A673 (cell line): ENCODE measurements at regions of chr12 and their contacts with region 1.

Region 1: DNA sequence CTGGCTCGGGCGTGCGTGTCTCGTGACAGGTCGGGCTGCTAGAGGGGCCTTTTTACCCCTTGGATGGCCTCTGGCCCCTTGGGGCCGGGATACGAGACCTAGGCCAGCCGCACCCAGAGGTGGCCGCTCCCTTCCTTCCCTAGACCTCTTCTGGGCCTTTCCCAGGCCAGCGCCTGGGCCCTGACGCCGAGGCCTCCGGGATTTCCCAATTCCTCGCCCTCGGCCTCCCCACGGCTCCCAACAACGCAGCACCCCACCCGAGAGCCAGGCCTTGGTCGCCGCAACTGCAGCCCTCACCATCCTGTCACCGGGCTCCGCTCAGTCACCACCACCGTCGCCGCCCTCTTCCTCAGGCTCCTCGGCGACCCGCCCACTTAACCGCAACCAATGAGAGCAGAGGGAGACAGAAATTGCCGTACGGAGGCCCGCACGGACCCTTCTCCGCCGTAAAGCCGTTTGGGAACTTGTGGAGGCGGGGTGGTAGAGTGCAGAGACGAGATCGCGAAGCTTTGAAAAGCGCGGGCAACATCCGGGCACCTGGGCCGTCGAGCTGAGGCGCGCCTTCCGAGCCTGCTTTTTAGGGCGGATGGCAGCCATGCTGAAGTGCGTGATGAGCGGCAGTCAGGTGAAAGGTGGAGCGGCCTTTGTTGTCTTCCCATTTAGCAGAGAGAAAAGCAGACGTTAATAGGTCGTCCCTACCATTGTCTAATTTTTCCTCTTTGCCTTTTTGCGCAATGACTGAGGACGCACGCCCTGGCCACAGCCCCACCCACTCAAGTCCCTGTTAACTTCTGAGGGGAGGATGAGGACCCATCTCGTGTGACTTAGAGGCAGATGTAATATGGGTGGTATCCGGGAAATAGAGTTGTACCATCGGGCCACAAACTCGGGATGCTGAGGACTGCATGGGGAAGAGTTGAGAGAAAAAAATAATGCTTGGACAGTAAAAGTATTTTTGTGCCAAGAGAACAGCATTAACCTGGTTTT is at the starts of genes RAD9B and VPS29:
- DNase-seq: peak; percentile 99
- H3K4me3 ChIP-seq: peak within 1 kb of the TSS; percentile 89
- H3K27ac ChIP-seq: peak within 1 kb of the TSS; percentile 78
- H3K4me1 ChIP-seq: peaks cover 14% of the 10 kb centered on the region
- H3K27me3 ChIP-seq: no peaks in the 10 kb centered on the region
- CTCF ChIP-seq: no peak
- total RNA-seq, gene RAD9B: 0.28 TPM in 1 of 2 replicates, not detected in the other
- total RNA-seq, gene VPS29: 147 and 150 TPM in 2 replicates

Region 2: GRCh38 chr12:110180591-110181005 is 321.4 kb before region 1 on chr12:
- CTCF ChIA-PET with region 1: no interaction called
- POLR2A ChIA-PET with region 1: no interaction called
- intact Hi-C with region 1: no loop called
- DNase-seq: no peak
- H3K4me3 ChIP-seq: no peak overlapping the region
- H3K27ac ChIP-seq: no peak overlapping the region
- H3K4me1 ChIP-seq: peaks cover 17% of the 10 kb centered on the region
- H3K27me3 ChIP-seq: no peaks in the 10 kb centered on the region
- CTCF ChIP-seq: no peak

Region 3: DNA sequence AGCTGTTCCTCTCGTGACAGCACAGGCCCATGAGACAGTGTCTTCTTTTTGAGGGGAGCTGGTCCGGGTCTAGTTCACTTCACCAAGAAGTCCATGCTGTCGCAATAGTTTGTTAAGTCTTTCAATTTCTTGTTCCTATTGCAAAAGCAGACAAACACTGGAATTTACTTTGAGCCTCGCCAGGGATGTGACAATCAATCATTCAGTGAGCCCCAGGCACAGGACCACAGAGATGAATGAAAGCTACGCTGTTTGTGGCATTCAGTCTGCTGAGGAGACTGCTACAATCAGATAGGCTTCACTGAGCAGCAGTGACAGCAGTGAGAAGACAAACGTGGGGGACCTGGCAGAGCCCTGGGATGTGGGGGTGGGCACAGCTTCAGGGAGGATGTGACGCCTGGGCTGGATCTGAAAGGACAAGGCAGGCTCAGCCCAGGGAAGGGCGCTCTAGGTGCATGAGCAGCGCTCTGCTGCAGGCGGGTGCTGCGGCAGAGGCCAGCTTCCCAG is 147.3 kb after region 1 on chr12:
- CTCF ChIA-PET with region 1: interaction called, 10 read pairs
- POLR2A ChIA-PET with region 1: no interaction called
- intact Hi-C with region 1: no loop called
- DNase-seq: no peak
- H3K4me3 ChIP-seq: no peak overlapping the region
- H3K27ac ChIP-seq: no peak overlapping the region
- H3K4me1 ChIP-seq: peaks cover 14% of the 10 kb centered on the region
- H3K27me3 ChIP-seq: no peaks in the 10 kb centered on the region
- CTCF ChIP-seq: no peak

Region 4: DNA sequence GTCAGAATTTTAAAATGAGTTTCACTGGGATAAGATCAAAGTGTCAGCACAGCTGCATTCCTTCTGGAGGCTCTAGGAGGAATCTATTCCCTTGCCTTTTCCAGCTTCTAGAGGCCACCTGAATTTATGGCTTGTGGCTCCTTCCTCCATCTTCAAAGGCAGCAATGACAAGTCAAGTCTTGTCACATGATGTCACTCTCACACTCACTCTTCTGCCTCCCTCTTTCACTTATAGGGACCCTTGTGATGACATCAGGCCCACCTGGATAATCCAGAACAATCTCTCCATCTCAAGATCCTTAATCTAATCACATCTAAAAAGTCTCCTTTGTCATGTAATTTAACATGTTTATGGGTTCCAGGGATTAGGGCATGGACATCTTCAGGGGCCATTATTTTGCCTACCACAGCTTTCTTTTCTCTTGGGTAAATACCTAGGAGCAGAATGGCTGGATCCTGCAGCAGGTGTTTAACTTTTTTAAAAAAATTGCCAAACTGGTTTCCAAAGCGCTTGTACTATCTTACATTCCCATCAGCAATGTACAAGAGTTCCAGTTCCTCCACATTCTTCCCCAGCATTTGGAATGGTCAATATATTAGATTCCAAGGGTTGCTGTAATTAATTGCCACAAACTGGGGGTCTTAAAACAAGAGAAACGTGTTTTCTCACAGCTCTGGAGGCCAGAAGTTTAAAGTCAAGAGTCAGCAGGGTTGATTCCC is 445.8 kb after region 1 on chr12:
- CTCF ChIA-PET with region 1: no interaction called
- POLR2A ChIA-PET with region 1: no interaction called
- intact Hi-C with region 1: no loop called
- DNase-seq: no peak
- H3K4me3 ChIP-seq: no peak overlapping the region
- H3K27ac ChIP-seq: no peak overlapping the region
- H3K4me1 ChIP-seq: no peaks in the 10 kb centered on the region
- H3K27me3 ChIP-seq: no peaks in the 10 kb centered on the region
- CTCF ChIP-seq: no peak